Right cardiac atrium (tissue), 5 donors: ENCODE measurements at regions of chr1 and their contacts with region 1.

Region 1: DNA sequence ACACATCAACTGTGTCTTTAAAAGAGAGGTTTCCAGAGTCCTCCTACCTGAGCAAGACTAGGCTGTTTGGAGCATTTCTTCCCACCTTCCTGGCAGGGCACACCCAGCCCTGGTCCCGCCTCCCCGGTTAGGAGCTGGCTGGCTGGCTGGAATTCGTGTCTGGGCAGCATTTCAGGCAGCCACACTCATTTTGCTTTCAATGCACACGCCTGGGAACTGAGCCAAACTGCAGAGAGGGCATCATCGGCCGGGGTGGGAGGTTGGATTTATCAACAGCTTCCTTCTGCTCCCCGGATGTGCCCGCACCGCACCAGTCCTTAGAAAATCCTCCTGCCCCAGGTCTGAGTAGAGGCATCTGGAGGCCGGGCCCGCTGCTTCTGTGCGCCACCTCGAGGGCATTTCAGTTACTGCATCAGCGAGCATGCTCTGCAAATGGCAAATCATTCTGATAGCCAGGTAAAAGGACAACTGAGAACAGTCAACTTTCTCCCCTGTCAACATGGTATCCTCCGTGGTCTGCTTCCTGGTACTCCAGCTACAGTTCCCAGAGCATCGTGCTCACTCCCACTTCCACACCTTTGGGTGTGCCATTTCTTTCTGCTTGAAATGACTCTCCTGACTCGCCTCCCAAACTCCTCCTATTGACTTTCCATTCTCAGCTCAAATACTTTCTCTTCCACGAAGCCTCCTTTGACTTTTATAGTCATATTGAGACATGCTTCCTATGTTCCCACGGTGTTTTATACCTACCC is 20.6 kb downstream of the TCEA3 start:
- DNase-seq: peak; percentile 83 to 94 (median 94)
- ATAC-seq: peak; percentile 87 to 91
- H3K4me3 ChIP-seq: no peak overlapping the region
- H3K27ac ChIP-seq: peak overlapping the region; percentile 19
- H3K4me1 ChIP-seq: no peaks in the 10 kb centered on the region
- H3K27me3 ChIP-seq: no peaks in the 10 kb centered on the region

Region 2: GRCh38 chr1:23282957-23283356 is 121.0 kb before region 1 on chr1:
- intact Hi-C with region 1: no loop called
- DNase-seq: no peak
- ATAC-seq: no peak
- H3K4me3 ChIP-seq: no peak overlapping the region
- H3K27ac ChIP-seq: no peak overlapping the region
- H3K4me1 ChIP-seq: no peaks in the 10 kb centered on the region
- H3K27me3 ChIP-seq: no peaks in the 10 kb centered on the region

Region 3: GRCh38 chr1:23303524-23303923 is 100.4 kb before region 1 on chr1:
- intact Hi-C with region 1: loop called in 1 of 4 experiments (anchors 10 kb)
- DNase-seq: no peak
- ATAC-seq: no peak
- H3K4me3 ChIP-seq: no peak overlapping the region
- H3K27ac ChIP-seq: no peak overlapping the region
- H3K4me1 ChIP-seq: no peaks in the 10 kb centered on the region
- H3K27me3 ChIP-seq: no peaks in the 10 kb centered on the region

Region 4: GRCh38 chr1:23344111-23344986 is 59.6 kb before region 1 on chr1 and contains the start of gene HNRNPR:
- intact Hi-C with region 1: loop called in 2 of 4 experiments (anchors 10 kb)
- DNase-seq: peak; percentile 100
- ATAC-seq: peak; percentile 99
- H3K4me3 ChIP-seq: peak within 1 kb of the TSS; percentile 99
- H3K27ac ChIP-seq: peak within 1 kb of the TSS; percentile 81
- H3K4me1 ChIP-seq: no peaks in the 10 kb centered on the region
- H3K27me3 ChIP-seq: no peaks in the 10 kb centered on the region
- total RNA-seq, gene HNRNPR: 59.8 to 73.7 (median 62.1) TPM

Region 5: DNA sequence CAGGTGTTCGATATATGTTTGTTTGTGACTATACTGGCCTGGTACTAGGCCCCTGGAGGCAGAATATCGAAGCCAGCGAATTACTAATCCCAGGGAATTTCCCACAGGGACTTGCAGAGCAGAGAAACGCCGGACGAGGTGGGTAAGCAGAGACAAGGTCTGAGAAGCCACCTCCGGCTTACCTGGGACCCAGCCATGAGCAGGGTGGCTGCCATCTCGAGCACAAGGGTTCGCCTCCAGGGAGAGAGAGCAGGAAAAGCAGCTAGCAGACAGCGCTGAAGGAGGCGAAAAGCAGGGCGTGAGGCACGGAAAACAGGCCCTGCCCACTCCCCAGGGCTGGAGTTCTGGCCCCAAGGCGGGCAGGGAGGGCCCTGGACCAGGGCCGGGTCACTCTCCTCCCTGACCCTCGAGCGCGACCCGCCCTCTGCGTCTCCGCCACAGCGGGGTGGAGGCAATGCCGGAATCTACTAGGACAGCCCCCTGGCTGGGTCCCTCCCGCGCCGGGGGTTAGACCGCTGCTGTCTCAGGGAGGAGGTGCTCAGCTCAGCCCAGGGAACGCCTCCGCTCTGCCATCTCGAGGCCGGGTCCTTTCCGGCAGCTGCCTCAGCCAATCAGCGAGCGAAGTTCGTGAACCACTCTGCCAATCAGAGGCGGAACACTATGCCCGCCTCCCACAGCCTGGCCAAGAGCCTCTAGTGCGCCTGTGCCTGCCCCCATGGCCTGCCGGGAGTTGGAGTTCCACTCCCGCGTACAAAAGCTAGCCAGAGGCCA is 35.9 kb before region 1 on chr1:
- intact Hi-C with region 1: loop called in 1 of 4 experiments (anchors 5 kb)
- DNase-seq: peak; percentile 99 to 100 (median 100)
- ATAC-seq: peak; percentile 95 to 96
- H3K4me3 ChIP-seq: peak overlapping the region; percentile 85
- H3K27ac ChIP-seq: peak overlapping the region; percentile 99
- H3K4me1 ChIP-seq: peaks cover 8% of the 10 kb centered on the region
- H3K27me3 ChIP-seq: no peaks in the 10 kb centered on the region

Region 6: GRCh38 chr1:23484253-23485001 is 80.5 kb after region 1 on chr1:
- intact Hi-C with region 1: no loop called
- DNase-seq: peak; percentile 97 to 99 (median 98)
- ATAC-seq: peak; percentile 95
- H3K4me3 ChIP-seq: peak overlapping the region; percentile 99
- H3K27ac ChIP-seq: peak overlapping the region; percentile 95
- H3K4me1 ChIP-seq: peaks cover 12% of the 10 kb centered on the region
- H3K27me3 ChIP-seq: no peaks in the 10 kb centered on the region